CD14-positive monocyte (primary cell): ENCODE measurements at regions of chr20 and their contacts with region 1.

Region 1: GRCh38 chr20:16701296-16701695 is 28.5 kb upstream of the SNRPB2 start:
- DNase-seq: no peak
- H3K4me3 ChIP-seq: no peak overlapping the region
- H3K4me3 Mint-ChIP-seq: no peak overlapping the region
- H3K27ac ChIP-seq: no peak overlapping the region
- H3K27ac Mint-ChIP-seq: no peak overlapping the region
- H3K4me1 ChIP-seq: no peaks in the 10 kb centered on the region
- H3K4me1 Mint-ChIP-seq: no peaks in the 10 kb centered on the region
- H3K27me3 ChIP-seq: no peaks in the 10 kb centered on the region
- H3K27me3 Mint-ChIP-seq: peaks cover 0 to 3% (median 0%) of the 10 kb centered on the region in 3 donors
- CTCF ChIP-seq: peak; percentile 26

Region 2: GRCh38 chr20:16761305-16761829 is 60.1 kb after region 1 on chr20:
- intact Hi-C with region 1: loop called in 1 of 2 experiments (anchors 10 kb)
- DNase-seq: peak; percentile 25 to 46 (median 42)
- H3K4me3 ChIP-seq: no peak overlapping the region
- H3K4me3 Mint-ChIP-seq: no peak overlapping the region
- H3K27ac ChIP-seq: no peak overlapping the region
- H3K27ac Mint-ChIP-seq: no peak overlapping the region
- H3K4me1 ChIP-seq: peaks cover 0 to 10% of the 10 kb centered on the region in 2 donors
- H3K4me1 Mint-ChIP-seq: peaks cover 14% of the 10 kb centered on the region
- H3K27me3 ChIP-seq: peaks cover 0 to 3% of the 10 kb centered on the region in 2 donors
- H3K27me3 Mint-ChIP-seq: peaks cover 2 to 6% (median 2%) of the 10 kb centered on the region in 3 donors
- CTCF ChIP-seq: peak; percentile 72